Activated naive CD4-positive, alpha-beta T cell treated with anti-CD3 and anti-CD28 coated beads for 36 hours (primary cell): ENCODE measurements at regions of chr6 and their contacts with region 1.

Region 1: DNA sequence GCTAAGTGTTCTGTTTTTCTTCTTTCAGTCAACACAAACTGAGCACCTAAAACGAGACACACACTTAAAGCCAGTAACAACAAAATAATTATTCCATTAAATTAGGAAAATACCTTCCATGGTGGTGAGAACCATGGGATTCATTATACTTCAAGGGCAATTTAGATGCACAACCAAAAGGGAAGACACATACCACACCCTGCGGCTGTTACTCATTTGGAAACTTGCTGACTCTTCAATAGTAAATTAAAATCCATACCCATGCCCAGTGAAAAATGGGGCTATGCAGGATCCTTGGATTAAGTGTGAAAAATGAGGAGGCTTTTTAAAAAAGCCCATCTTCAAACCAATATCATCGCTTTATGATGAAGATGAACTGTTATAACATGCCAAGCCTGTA is 142.7 kb downstream of the GJA10 start:
- DNase-seq: no peak
- H3K4me3 Mint-ChIP-seq: no peak overlapping the region
- H3K27ac Mint-ChIP-seq: peak overlapping the region; percentile 66
- H3K4me1 Mint-ChIP-seq: peaks cover 63% of the 10 kb centered on the region
- H3K27me3 Mint-ChIP-seq: no peaks in the 10 kb centered on the region

Region 2: DNA sequence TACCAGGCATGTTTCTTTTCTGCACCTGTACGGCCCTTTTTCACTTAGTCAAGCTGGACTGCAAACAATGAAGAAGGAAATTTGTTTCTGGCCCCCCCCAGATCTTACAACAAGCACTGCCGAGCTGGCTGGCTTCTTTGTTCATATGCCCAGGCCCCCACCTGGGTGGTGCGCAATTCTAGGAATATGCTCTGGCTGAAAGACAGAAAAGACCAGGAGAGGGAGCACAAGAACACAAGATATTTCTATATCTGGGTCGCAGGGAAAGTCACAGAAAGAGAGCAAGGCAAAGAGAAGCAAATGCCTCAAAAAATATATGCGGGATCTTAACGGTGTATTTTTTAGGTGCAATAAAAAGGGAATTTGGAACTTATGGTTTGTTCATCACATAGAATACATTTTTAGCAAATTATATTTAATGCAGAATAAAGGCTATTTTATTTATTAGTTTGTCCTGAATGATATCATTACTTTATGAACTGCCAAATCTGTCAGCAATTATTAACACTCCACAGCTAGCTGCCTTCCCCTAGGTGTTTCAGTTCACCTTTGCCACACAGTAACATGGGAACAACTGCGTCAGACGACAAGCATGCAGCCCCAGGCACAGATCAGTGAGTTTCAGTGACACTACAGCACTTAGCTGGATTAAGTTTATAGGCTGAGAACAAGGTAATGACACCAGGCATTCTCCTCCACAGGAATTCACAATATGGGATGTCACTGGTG is 66.2 kb before region 1 on chr6:
- CTCF ChIA-PET with region 1: no interaction called
- intact Hi-C with region 1: no loop called
- DNase-seq: peak; percentile 36
- H3K4me3 Mint-ChIP-seq: no peak overlapping the region
- H3K27ac Mint-ChIP-seq: no peak overlapping the region
- H3K4me1 Mint-ChIP-seq: peaks cover 54% of the 10 kb centered on the region
- H3K27me3 Mint-ChIP-seq: no peaks in the 10 kb centered on the region

Region 3: GRCh38 chr6:90025523-90026061 is 11.4 kb before region 1 on chr6:
- CTCF ChIA-PET with region 1: no interaction called
- intact Hi-C with region 1: loop called (anchors 1 kb)
- DNase-seq: peak; percentile 85
- H3K4me3 Mint-ChIP-seq: peak overlapping the region; percentile 47
- H3K27ac Mint-ChIP-seq: peak overlapping the region; percentile 87
- H3K4me1 Mint-ChIP-seq: peaks cover 93% of the 10 kb centered on the region
- H3K27me3 Mint-ChIP-seq: no peaks in the 10 kb centered on the region